ENCODE measurements at regions of chr15 and their contacts with region 1.

Region 1: DNA sequence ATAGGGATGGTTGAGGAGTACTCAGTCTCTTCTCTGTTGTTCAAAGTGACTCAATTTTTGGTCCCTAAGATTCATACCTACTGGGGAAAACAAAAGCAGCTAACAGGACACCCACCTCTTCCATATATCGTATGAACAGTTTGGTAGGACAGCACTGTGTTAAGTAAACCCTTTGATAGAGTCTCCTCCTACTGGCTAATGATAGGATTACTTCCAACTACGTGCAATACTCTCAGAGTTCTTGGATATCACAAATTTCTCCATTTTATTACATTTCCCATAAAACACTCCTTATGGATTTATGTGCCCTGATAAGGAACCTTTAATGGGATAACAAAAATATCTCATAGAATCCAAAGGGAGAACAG is 200.2 kb upstream of the GOLGA6L4 start:
- DNase-seq: no peak
- ATAC-seq: peak; percentile 87
- H3K4me3 Mint-ChIP-seq: no peak overlapping the region
- H3K27ac Mint-ChIP-seq: no peak overlapping the region
- H3K4me1 Mint-ChIP-seq: no peaks in the 10 kb centered on the region
- H3K27me3 Mint-ChIP-seq: peaks cover 3% of the 10 kb centered on the region
- CTCF ChIP-seq: no peak; the same call in 1 of the 2 replicates

Region 2: DNA sequence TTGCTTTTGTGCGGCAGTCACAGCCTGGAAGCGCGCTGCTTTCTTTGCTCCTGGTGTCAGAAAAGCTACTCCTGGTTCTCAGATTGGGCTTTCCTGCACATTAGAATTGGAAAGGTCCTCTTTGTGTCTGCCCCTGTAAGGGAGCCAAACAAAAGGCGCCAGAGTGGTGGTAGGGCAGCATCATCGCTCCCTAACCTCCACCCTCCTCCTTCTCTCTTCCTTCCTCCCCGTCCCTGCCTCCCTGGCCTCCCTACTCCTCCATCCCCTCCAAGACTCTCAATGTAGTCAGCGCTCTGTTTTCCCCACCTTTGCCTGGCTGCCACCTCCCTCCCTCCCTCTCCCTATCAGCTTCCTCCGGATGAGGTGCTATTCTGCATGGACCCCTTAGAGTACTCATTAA is 522.9 kb before region 1 on chr15:
- CTCF ChIA-PET with region 1: no interaction called
- POLR2A ChIA-PET with region 1: no interaction called
- DNase-seq: no peak
- ATAC-seq: peak; percentile 92
- H3K4me3 Mint-ChIP-seq: no peak overlapping the region
- H3K27ac Mint-ChIP-seq: no peak overlapping the region
- H3K4me1 Mint-ChIP-seq: peaks cover 23% of the 10 kb centered on the region
- H3K27me3 Mint-ChIP-seq: peaks cover 18% of the 10 kb centered on the region
- CTCF ChIP-seq: no peak

Region 3: GRCh38 chr15:83657549-83657948 is 377.8 kb before region 1 on chr15:
- CTCF ChIA-PET with region 1: interaction called, 15 read pairs
- POLR2A ChIA-PET with region 1: no interaction called
- DNase-seq: peak; percentile 48
- ATAC-seq: peak; percentile 19
- H3K4me3 Mint-ChIP-seq: no peak overlapping the region
- H3K27ac Mint-ChIP-seq: no peak overlapping the region
- H3K4me1 Mint-ChIP-seq: peaks cover 4% of the 10 kb centered on the region; the same call in 1 of the 2 replicates
- H3K27me3 Mint-ChIP-seq: peaks cover 42% of the 10 kb centered on the region
- CTCF ChIP-seq: peak; percentile 45; the same call in 1 of the 2 replicates

Region 4: DNA sequence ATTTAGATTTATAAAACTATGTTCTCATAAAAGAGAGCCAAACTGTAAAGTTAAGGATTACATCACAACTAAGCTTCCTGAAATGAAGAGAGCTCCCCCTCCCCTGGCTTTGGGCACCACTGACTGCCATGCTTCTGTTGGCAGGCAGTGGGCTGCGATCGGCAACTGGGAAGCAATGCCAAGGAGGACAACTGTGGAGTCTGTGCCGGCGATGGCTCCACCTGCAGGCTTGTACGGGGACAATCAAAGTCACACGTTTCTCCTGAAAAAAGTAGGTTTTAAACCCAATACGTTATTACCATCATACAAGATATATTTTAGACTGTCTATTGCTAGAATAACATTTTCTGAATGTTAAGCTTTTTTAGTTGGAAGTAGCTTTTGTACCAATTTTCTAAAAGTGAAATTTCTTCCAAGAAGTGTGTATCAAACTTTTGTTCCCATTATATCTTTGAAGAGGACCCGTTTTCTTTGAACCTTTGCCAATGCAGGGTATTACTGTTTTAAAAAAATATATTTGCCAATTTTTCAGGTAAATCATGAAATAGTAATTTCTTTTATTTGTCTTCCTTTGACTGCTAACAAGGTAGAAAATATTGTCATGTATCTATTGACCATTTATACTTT is 197.3 kb before region 1 on chr15:
- CTCF ChIA-PET with region 1: interaction called, 16 read pairs
- POLR2A ChIA-PET with region 1: no interaction called
- DNase-seq: peak; percentile 67
- ATAC-seq: peak; percentile 95
- H3K4me3 Mint-ChIP-seq: no peak overlapping the region
- H3K27ac Mint-ChIP-seq: no peak overlapping the region
- H3K4me1 Mint-ChIP-seq: peaks cover 4% of the 10 kb centered on the region
- H3K27me3 Mint-ChIP-seq: no peaks in the 10 kb centered on the region
- CTCF ChIP-seq: no peak

Region 5: GRCh38 chr15:83926116-83926515 is 109.3 kb before region 1 on chr15:
- CTCF ChIA-PET with region 1: no interaction called
- POLR2A ChIA-PET with region 1: no interaction called
- DNase-seq: no peak
- ATAC-seq: no peak
- H3K4me3 Mint-ChIP-seq: no peak overlapping the region
- H3K27ac Mint-ChIP-seq: no peak overlapping the region
- H3K4me1 Mint-ChIP-seq: peaks cover 8% of the 10 kb centered on the region; the same call in 1 of the 2 replicates
- H3K27me3 Mint-ChIP-seq: no peaks in the 10 kb centered on the region
- CTCF ChIP-seq: no peak

Region 6: DNA sequence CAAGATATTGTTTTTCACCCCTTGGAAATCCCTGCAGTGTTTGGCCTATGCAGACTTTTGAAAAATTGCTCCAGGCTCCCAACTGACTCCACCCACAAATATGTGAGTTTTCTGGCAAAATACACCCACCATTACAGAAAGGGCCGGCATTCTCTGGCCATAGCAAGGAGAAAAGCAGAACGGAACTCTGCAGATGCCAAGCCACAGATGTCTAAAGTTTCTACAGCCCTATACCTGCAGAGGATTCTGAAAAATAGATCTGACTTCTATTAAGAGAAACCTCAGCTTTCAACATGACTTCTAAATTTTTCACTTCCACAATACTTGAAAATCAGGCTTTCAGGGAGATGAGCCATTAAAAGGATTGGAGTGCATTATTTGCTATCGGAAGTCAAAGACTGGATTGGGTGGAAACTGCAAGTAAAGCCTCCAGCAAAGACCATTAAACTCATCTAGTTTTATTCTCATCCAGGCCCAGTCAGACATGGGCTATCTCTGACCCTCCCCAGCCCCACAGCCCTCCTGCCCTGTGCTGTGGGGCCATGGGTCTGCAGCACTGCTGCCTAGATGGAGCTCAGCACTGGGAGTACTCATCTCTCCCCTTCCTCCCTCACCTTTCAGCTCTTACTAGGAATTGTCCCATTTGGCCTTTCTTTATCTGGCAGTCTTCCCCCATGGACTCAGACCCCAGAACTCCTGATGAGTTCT is 42.9 kb before region 1 on chr15:
- CTCF ChIA-PET with region 1: interaction called, 15 read pairs
- POLR2A ChIA-PET with region 1: no interaction called
- DNase-seq: no peak
- ATAC-seq: no peak
- H3K4me3 Mint-ChIP-seq: no peak overlapping the region
- H3K27ac Mint-ChIP-seq: no peak overlapping the region
- H3K4me1 Mint-ChIP-seq: no peaks in the 10 kb centered on the region
- H3K27me3 Mint-ChIP-seq: no peaks in the 10 kb centered on the region
- CTCF ChIP-seq: no peak

Region 7: GRCh38 chr15:84016371-84016770 is 19.0 kb before region 1 on chr15:
- CTCF ChIA-PET with region 1: interaction called, 10 read pairs
- POLR2A ChIA-PET with region 1: no interaction called
- DNase-seq: no peak
- ATAC-seq: no peak
- H3K4me3 Mint-ChIP-seq: no peak overlapping the region
- H3K27ac Mint-ChIP-seq: no peak overlapping the region
- H3K4me1 Mint-ChIP-seq: no peaks in the 10 kb centered on the region
- H3K27me3 Mint-ChIP-seq: no peaks in the 10 kb centered on the region; the same call in 1 of the 2 replicates
- CTCF ChIP-seq: no peak

Region 8: DNA sequence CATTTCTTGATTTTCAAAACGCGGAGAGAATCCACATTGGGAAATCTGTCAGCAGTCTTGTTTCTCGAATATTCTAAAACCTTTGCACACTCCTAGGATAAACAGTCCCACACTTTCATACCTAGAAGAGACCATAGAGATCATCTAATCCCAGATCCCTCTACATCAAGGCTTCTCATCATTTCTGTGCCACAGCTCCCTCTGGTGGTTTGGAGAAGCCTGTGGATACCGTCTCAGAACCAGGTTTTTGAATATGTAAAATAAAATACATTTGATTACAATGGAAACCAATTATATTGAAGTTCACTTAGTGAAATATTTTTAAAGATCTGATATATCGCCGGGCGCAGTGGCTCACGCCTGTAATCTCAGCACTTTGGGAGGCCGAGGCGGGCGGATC is 11.7 kb before region 1 on chr15:
- CTCF ChIA-PET with region 1: interaction called, 24 read pairs
- POLR2A ChIA-PET with region 1: no interaction called
- DNase-seq: peak; percentile 43
- ATAC-seq: peak; percentile 73
- H3K4me3 Mint-ChIP-seq: no peak overlapping the region
- H3K27ac Mint-ChIP-seq: no peak overlapping the region
- H3K4me1 Mint-ChIP-seq: no peaks in the 10 kb centered on the region
- H3K27me3 Mint-ChIP-seq: peaks cover 3% of the 10 kb centered on the region
- CTCF ChIP-seq: peak; percentile 47

Region 9: GRCh38 chr15:84079885-84080777 is 44.7 kb after region 1 on chr15:
- CTCF ChIA-PET with region 1: interaction called, 11 read pairs
- POLR2A ChIA-PET with region 1: no interaction called
- DNase-seq: peak; percentile 77
- ATAC-seq: peak; percentile 92
- H3K4me3 Mint-ChIP-seq: peak overlapping the region; percentile 82
- H3K27ac Mint-ChIP-seq: no peak overlapping the region
- H3K4me1 Mint-ChIP-seq: peaks cover 10% of the 10 kb centered on the region
- H3K27me3 Mint-ChIP-seq: peaks cover 88% of the 10 kb centered on the region
- CTCF ChIP-seq: no peak

Region 10: GRCh38 chr15:84098604-84099003 is 63.2 kb after region 1 on chr15:
- CTCF ChIA-PET with region 1: no interaction called
- POLR2A ChIA-PET with region 1: no interaction called
- DNase-seq: no peak
- ATAC-seq: no peak
- H3K4me3 Mint-ChIP-seq: no peak overlapping the region
- H3K27ac Mint-ChIP-seq: no peak overlapping the region
- H3K4me1 Mint-ChIP-seq: no peaks in the 10 kb centered on the region
- H3K27me3 Mint-ChIP-seq: peaks cover 5% of the 10 kb centered on the region; the same call in 1 of the 2 replicates
- CTCF ChIP-seq: no peak

Region 11: DNA sequence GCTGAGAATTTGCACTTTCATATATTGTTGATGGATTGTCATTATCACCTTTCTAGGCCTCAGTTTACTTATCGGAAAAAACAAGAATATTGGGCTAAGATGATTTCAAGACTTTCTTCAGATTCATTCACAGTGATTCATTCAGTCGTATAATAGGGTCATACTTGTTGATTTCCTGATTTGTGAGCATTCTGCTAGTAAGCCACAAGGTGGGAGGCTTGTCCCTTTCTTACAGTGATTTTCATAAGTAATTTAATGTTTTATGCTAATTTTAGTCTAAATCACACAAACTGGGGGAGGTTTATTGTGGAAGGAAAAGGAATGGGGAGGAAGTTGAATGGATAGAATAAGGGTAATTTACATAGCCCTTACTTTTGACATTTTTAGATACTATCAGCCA is 73.3 kb after region 1 on chr15:
- CTCF ChIA-PET with region 1: no interaction called
- POLR2A ChIA-PET with region 1: no interaction called
- DNase-seq: no peak
- ATAC-seq: no peak
- H3K4me3 Mint-ChIP-seq: no peak overlapping the region
- H3K27ac Mint-ChIP-seq: no peak overlapping the region
- H3K4me1 Mint-ChIP-seq: no peaks in the 10 kb centered on the region
- H3K27me3 Mint-ChIP-seq: peaks cover 5% of the 10 kb centered on the region; the same call in 1 of the 2 replicates
- CTCF ChIP-seq: no peak